ENCODE measurements at regions of chr12 and their contacts with region 1.

Region 1: GRCh38 chr12:2068653-2069052 is 15.9 kb downstream of the CACNA1C start:
- DNase-seq: no peak
- H3K4me3 ChIP-seq: no peak overlapping the region
- H3K27ac ChIP-seq: peak overlapping the region; percentile 22 to 49 (median 36)
- H3K4me1 ChIP-seq: peaks cover 28 to 66% (median 56%) of the 10 kb centered on the region in 4 donors
- H3K27me3 ChIP-seq: no peaks in the 10 kb centered on the region
- CTCF ChIP-seq: no peak
- EP300 ChIP-seq: no peak
- POLR2A ChIP-seq: no peak

Region 2: GRCh38 chr12:1706633-1706981 is 362.0 kb before region 1 on chr12:
- intact Hi-C with region 1: no loop called
- DNase-seq: no peak
- H3K4me3 ChIP-seq: no peak overlapping the region
- H3K27ac ChIP-seq: no peak overlapping the region
- H3K4me1 ChIP-seq: peaks cover 9 to 55% (median 50%) of the 10 kb centered on the region in 4 donors
- H3K27me3 ChIP-seq: no peaks in the 10 kb centered on the region
- CTCF ChIP-seq: no peak
- EP300 ChIP-seq: no peak
- POLR2A ChIP-seq: no peak

Region 3: DNA sequence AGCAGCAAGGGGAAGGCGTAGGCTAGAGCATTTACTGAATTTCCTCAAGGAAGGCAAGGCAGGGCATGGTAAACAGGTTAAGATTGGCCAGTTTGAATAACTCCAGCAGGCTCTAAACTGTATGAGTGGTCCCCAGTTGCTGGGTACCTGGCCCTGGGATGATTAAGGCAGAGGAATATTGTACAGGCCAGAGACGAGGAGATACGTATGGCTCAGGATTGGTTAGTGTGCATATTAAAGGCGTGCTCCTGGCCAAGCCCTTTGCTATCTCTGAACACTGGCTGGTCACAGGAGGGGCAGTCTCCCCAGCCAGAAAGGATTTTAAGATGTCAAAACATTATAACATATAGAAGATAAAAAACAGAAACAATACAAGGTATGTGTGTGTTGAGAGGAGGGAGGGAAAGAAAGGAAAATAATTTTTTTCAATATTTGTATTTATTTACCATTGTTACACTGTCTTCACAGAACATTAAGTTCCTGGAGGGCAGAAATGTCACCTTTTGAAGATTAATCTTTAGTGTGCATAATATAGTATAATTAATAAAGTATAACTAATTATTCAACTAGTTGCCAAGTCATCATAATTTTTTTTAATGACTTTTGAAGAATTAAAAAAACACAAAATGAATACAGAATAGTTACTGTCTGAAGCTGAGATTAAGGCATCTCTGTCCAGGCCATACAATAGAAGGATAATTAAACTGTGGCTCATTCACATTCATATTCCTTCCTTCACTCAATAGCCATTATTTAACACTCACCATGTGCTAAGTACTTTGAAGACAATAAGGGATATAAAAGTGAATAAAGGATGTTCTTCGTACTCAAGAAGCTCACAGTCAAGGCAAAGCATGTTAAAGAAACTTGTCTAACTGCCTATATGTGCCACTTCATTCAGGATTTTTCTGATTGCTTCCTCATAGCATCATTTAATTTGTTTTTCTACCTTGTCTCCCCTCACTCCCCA is 106.3 kb before region 1 on chr12:
- intact Hi-C with region 1: no loop called
- DNase-seq: no peak
- H3K4me3 ChIP-seq: no peak overlapping the region
- H3K27ac ChIP-seq: peak overlapping the region; percentile 49 to 79 (median 73)
- H3K4me1 ChIP-seq: peaks cover 0 to 37% (median 32%) of the 10 kb centered on the region in 4 donors
- H3K27me3 ChIP-seq: no peaks in the 10 kb centered on the region
- CTCF ChIP-seq: no peak
- EP300 ChIP-seq: no peak
- POLR2A ChIP-seq: no peak

Region 4: DNA sequence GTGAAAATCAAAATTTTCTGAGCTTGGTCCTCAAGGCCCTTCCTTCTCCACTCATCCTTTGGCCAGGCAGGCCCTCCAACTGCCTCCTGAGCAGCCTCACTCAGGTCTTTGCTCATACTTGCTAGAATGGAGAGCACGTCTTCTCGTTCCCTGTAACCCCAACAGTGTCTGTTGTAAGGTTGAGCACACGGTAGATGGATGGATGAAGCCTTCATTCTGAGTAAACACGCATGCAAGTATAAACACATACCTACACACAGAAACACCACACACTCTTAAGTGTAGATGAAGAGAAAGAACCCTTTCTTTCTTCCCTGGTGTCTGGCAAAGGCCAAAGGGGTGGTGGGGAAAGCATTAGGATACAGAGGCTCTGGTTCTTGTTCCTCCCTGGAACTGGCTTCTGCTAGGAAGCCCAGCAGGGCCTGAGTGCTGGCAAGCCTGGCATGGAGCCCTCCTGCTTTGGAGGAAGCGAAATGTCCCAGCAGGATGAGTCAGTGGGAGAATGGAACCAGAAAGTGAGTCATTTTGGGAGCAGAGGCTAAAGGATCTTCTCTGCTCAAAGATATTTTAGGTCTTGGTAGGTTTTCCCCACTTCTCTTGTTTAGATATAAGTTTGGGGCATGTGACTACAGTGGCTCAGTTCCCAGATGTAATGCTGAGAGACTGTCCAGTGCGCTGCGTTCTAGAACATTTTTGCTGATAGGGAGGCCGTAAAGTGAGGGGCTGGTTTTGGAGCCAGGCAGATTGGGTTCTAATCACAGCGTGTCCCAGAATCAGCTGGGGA is 111.5 kb after region 1 on chr12:
- intact Hi-C with region 1: loop called (anchors 5 kb)
- DNase-seq: no peak
- H3K4me3 ChIP-seq: no peak overlapping the region
- H3K27ac ChIP-seq: peak overlapping the region; percentile 75 to 89 (median 78)
- H3K4me1 ChIP-seq: peaks cover 54 to 93% (median 80%) of the 10 kb centered on the region in 4 donors
- H3K27me3 ChIP-seq: no peaks in the 10 kb centered on the region
- CTCF ChIP-seq: peak in 1 of 3 experiments; percentile 8
- EP300 ChIP-seq: peak; percentile 45
- POLR2A ChIP-seq: no peak

Region 5: GRCh38 chr12:2580821-2581220 is 512.2 kb after region 1 on chr12:
- intact Hi-C with region 1: no loop called
- DNase-seq: no peak
- H3K4me3 ChIP-seq: no peak overlapping the region
- H3K27ac ChIP-seq: no peak overlapping the region
- H3K4me1 ChIP-seq: peaks cover 6 to 29% (median 24%) of the 10 kb centered on the region in 4 donors
- H3K27me3 ChIP-seq: no peaks in the 10 kb centered on the region
- CTCF ChIP-seq: no peak
- EP300 ChIP-seq: no peak
- POLR2A ChIP-seq: no peak

Measured in esophagus muscularis mucosa (tissue), 4 donors.